Heart right ventricle (tissue), 16 donors: ENCODE measurements at regions of chr15 and their contacts with region 1.

Region 1: DNA sequence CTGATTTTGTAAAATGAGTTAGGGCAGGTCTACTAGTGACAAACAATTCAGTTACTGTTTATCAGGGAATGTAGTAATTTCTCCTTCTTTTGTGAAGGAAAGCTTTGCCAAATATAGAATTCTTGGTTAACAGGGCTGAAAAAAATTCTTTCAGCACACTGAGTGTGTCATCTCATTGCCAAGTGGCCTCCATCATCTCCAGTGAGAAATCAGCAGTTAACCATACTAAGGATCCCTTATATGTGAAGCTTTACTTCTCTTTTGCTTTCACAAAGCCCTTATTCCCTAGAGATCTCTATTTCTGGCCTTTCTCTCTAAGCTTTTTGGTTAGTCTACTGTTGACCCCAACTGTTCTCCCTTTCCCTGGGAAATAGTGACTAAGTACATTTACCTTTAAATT is 269.1 kb downstream of the SCAPER start:
- DNase-seq: no peak
- ATAC-seq: no peak
- H3K4me3 ChIP-seq: no peak overlapping the region
- H3K27ac ChIP-seq: no peak overlapping the region
- H3K4me1 ChIP-seq: peaks cover 0 to 12% (median 0%) of the 10 kb centered on the region in 9 donors
- H3K27me3 ChIP-seq: no peaks in the 10 kb centered on the region
- CTCF ChIP-seq: no peak

Region 2: GRCh38 chr15:76553564-76553963 is 82.5 kb before region 1 on chr15:
- intact Hi-C with region 1: no loop called
- DNase-seq: no peak
- ATAC-seq: no peak
- H3K4me3 ChIP-seq: no peak overlapping the region
- H3K27ac ChIP-seq: no peak overlapping the region
- H3K4me1 ChIP-seq: no peaks in the 10 kb centered on the region
- H3K27me3 ChIP-seq: no peaks in the 10 kb centered on the region
- CTCF ChIP-seq: no peak

Region 3: GRCh38 chr15:76682259-76682658 is 46.2 kb after region 1 on chr15:
- intact Hi-C with region 1: loop called in 1 of 10 experiments (anchors 10 kb)
- DNase-seq: peak in 1 of 2 donors; percentile 10
- ATAC-seq: peak in 1 of 8 donors; percentile 15
- H3K4me3 ChIP-seq: no peak overlapping the region
- H3K27ac ChIP-seq: no peak overlapping the region
- H3K4me1 ChIP-seq: peaks cover 0 to 2% (median 0%) of the 10 kb centered on the region in 9 donors
- H3K27me3 ChIP-seq: no peaks in the 10 kb centered on the region
- CTCF ChIP-seq: no peak